ENCODE measurements at regions of chr1 and their contacts with region 1.

Region 1: DNA sequence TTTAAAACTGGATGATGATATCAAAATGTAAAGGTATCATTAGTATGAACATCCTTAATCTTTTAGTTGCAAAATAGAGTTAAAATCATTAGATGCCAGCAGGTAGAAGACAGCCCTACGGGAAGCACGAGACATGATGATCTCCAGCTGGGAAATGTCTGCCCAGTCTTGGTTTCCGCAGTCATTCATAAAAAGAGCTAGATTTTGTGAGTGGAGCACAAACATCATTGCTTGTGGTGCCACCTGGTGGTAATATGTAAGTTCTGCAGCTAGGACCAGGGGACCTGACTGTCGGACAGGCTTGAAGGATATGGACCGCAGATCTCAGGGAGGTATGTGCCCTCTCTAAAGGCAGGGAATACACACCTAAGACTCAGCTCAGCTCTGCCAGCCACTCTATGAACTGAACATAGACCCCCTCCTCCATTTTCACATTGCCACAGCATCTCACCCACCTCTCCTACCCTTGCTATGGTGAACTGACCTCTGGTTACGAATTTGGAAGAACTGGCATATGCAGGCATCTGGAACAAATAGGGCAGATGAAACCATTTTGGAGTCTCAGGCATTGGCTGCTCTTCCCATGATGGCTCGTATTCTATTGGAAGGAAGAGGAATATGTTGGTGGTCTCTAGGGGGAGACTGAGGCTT is 9.2 kb downstream of the FCMR start:
- DNase-seq: peak; percentile 78

Region 2: GRCh38 chr1:206489980-206490770 is 422.4 kb before region 1 on chr1:
- intact Hi-C with region 1: loop called (anchors 10 kb)
- DNase-seq: peak; percentile 92

Region 3: GRCh38 chr1:206634365-206635079 is 278.0 kb before region 1 on chr1:
- intact Hi-C with region 1: loop called in 1 of 2 experiments (anchors 5 kb)
- DNase-seq: peak; percentile 99

Region 4: DNA sequence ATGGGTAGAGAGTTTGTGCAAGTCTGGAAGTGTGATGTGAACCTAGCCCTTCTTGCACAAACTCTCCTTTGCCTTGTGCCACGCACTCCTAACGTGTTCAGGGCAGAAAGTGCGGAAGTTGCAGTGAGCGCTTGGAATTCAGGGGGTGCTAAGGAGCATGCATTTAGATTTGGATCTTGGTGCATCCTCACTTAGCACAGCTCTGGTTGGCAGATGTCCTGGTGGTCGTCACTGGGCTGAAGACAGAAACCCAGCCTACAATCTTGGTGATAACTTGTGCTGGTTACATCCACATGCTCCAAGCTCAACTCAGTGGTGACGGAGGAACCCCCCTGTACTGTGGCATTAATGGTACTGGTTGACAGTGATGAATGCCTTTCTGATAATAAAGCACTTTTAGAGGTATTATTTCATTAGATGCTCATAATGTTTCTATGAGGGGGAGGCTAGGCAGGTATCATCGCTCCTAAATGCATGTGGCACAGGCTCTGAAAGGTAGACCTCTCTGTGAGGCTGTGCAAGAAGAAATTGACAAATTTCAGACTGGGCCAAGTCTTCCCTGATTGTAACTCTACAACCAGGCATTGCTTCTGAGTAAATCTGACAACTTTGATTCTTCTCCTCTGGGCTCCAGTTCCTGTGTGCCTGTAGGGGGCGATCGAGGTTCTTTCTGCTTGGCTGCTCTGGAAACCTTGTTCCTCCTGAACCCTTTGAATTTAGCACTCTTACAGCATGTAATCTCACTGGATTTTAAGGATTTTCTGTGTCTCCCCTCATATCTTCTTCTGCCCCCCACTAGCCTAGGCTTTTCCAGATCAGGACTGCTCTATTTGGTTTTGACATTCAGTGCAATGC is 187.2 kb before region 1 on chr1:
- intact Hi-C with region 1: loop called (anchors 5 to 10 kb)
- DNase-seq: no peak

Region 5: GRCh38 chr1:206734499-206735142 is 177.9 kb before region 1 on chr1:
- intact Hi-C with region 1: loop called (anchors 5 to 10 kb)
- DNase-seq: no peak

Measured in posterior vena cava (tissue), 2 donors.